PC-9 (cell line): ENCODE measurements at regions of chr19 and their contacts with region 1.

Region 1: DNA sequence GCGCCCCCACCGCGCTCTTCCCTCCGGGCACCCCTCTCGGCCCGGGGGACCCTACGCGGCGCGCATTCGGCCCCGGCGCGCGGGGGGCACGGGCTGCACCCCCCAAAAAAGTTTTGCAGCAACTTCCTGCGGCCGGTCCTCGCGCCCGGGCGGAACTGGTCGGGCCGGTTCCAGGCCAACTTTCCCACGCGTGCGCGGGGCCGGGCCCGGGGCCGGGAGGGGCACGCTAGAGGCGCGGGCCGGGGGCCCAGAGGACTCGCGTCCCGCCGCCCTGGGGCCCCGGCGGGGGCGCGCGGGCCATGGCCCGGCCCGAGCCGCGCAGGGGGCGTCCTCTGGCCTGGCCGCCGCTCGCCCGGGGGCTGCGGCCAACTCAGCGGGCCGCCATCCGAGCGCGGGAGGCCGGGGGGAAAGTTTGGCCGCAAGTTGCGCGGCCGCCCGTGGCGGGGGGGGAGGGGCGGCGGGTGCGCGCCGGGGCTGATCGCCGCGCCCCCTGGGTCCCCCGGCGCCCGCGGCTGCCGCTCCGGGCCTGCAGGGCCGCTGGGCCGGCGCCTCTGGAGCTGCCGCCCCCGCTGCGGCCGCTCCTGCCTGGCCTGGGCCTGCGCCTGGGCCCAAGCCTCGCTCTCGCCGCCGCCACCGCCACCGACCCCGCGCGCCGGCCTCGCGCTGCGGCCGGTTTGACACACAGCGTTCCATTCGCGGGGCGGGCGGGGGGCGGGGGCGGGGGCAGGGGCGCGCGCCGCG is at the start of gene NR2F6:
- DNase-seq: peak; percentile 11 to 53
- H3K4me3 ChIP-seq: peak within 1 kb of the TSS; percentile 82
- H3K27ac ChIP-seq: peak within 1 kb of the TSS; percentile 95
- H3K4me1 ChIP-seq: peaks cover 68% of the 10 kb centered on the region
- H3K27me3 ChIP-seq: no peaks in the 10 kb centered on the region
- CTCF ChIP-seq: no peak
- total RNA-seq, gene NR2F6: 90.8 and 112 TPM in 2 replicates

Region 2: GRCh38 chr19:17260842-17261325 is 15.5 kb after region 1 on chr19:
- CTCF ChIA-PET with region 1: interaction called, 9 read pairs
- POLR2A ChIA-PET with region 1: no interaction called
- intact Hi-C with region 1: loop called (anchors 2 kb)
- DNase-seq: peak; percentile 87 to 88
- H3K4me3 ChIP-seq: no peak overlapping the region
- H3K27ac ChIP-seq: no peak overlapping the region
- H3K4me1 ChIP-seq: peaks cover 20% of the 10 kb centered on the region
- H3K27me3 ChIP-seq: no peaks in the 10 kb centered on the region
- CTCF ChIP-seq: peak; percentile 96

Region 3: GRCh38 chr19:17266975-17267788 is 21.8 kb after region 1 on chr19 and contains the start of gene BABAM1:
- CTCF ChIA-PET with region 1: interaction called, 9 read pairs
- POLR2A ChIA-PET with region 1: interaction called, 15 read pairs
- intact Hi-C with region 1: loop called (anchors 1 kb)
- DNase-seq: peak; percentile 94 to 99
- H3K4me3 ChIP-seq: peak within 1 kb of the TSS; percentile 86
- H3K27ac ChIP-seq: peak within 1 kb of the TSS; percentile 70
- H3K4me1 ChIP-seq: peaks cover 25% of the 10 kb centered on the region
- H3K27me3 ChIP-seq: no peaks in the 10 kb centered on the region
- CTCF ChIP-seq: no peak
- total RNA-seq, gene BABAM1: 127 and 152 TPM in 2 replicates

Region 4: DNA sequence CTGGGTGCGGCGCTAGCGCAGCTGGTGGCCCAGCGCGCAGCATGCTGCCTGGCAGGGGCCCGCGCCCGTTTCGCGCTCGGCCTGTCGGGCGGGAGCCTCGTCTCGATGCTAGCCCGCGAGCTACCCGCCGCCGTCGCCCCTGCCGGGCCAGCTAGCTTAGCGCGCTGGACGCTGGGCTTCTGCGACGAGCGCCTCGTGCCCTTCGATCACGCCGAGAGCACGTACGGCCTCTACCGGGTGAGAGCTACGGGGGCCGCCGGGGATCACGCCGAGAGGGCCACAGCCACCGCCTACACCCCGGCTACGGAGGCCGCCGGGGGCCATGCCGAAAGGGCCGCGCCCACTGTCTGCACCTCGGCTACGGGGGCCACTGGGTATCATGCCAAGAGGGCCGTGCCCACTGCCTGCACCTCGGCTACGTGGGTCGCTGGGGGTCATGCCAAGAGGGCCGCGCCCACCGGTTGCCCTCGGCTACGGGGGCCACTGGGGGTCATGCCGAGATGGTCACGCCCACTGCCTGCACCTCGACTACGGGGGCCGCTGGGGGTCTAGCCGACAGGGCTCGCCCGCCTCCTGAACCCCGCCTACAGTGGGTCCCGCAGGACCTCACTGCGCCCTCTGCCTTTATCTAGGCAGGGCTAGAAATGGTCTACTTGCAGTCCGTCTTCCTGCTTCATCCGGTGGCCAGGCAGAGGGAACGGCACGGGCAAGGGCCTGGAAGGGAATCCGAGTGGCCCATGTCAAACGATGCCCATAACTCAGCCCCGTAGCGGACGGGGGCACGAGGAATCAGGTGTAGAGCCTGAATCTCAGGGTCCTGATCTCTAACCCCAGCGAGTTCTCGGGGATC is 266.5 kb after region 1 on chr19:
- CTCF ChIA-PET with region 1: no interaction called
- POLR2A ChIA-PET with region 1: no interaction called
- intact Hi-C with region 1: no loop called
- DNase-seq: peak; percentile 55 to 78
- H3K4me3 ChIP-seq: peak overlapping the region; percentile 88
- H3K27ac ChIP-seq: peak overlapping the region; percentile 98
- H3K4me1 ChIP-seq: peaks cover 42% of the 10 kb centered on the region
- H3K27me3 ChIP-seq: no peaks in the 10 kb centered on the region
- CTCF ChIP-seq: no peak